ENCODE measurements at regions of chr10 and their contacts with region 1.

Region 1: DNA sequence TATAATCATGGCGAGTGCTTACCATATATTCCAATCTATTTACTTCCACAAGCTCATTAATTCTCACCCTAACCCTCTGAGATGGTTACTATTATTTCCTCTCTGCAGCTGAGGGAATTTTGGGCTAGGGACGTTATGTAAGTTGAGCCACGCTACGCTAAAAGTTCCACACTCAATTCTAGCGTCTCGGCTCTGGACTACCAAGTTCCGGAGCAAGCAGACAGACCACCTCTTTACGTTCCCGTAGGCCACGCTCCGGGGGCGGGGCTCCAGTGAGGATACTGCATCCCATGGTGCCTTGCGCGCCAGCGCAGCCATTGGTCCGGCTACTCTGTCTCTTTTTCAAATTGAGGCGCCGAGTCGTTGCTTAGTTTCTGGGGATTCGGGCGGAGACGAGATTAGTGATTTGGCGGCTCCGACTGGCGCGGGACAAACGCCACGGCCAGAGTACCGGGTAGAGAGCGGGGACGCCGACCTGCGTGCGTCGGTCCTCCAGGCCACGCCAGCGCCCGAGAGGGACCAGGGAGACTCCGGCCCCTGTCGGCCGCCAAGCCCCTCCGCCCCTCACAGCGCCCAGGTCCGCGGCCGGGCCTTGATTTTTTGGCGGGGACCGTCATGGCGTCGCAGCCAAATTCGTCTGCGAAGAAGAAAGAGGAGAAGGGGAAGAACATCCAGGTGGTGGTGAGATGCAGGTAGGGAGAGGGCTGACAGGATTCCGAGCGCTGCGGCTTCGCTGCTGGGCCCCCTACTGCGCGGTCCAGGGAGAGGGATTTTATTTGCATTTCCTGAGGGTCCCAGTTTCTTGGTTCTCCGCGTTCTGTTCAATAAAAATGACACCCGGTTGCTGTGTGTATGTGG is at the start of gene KIF11:
- DNase-seq: peak; percentile 98
- H3K4me3 ChIP-seq: peak within 1 kb of the TSS; percentile 80
- H3K4me3 Mint-ChIP-seq: peak within 1 kb of the TSS; percentile 100
- H3K27ac Mint-ChIP-seq: peak within 1 kb of the TSS; percentile 99
- H3K4me1 ChIP-seq: peaks cover 5% of the 10 kb centered on the region; the same call in 1 of the 2 replicates
- H3K4me1 Mint-ChIP-seq: peaks cover 30% of the 10 kb centered on the region
- H3K27me3 ChIP-seq: no peaks in the 10 kb centered on the region
- H3K27me3 Mint-ChIP-seq: no peaks in the 10 kb centered on the region
- CTCF ChIP-seq: peak in 1 of 2 experiments; percentile 2
- total RNA-seq, gene KIF11: 37.7 TPM in 2 replicates

Region 2: GRCh38 chr10:92517034-92517655 is 75.8 kb before region 1 on chr10:
- CTCF ChIA-PET with region 1: interaction called, 12 read pairs
- POLR2A ChIA-PET with region 1: interaction called, 4 read pairs
- intact Hi-C with region 1: no loop called
- DNase-seq: peak; percentile 61 to 67
- H3K4me3 ChIP-seq: no peak overlapping the region
- H3K4me3 Mint-ChIP-seq: no peak overlapping the region
- H3K27ac Mint-ChIP-seq: no peak overlapping the region
- H3K4me1 ChIP-seq: no peaks in the 10 kb centered on the region
- H3K4me1 Mint-ChIP-seq: no peaks in the 10 kb centered on the region
- H3K27me3 ChIP-seq: no peaks in the 10 kb centered on the region
- H3K27me3 Mint-ChIP-seq: no peaks in the 10 kb centered on the region
- CTCF ChIP-seq: peak; percentile 77 to 80

Region 3: GRCh38 chr10:92573798-92574547 is 19.0 kb before region 1 on chr10 and contains the start of gene IDE:
- CTCF ChIA-PET with region 1: interaction called, 24 read pairs
- POLR2A ChIA-PET with region 1: interaction called, 11 read pairs
- intact Hi-C with region 1: loop called (anchors 2 kb)
- DNase-seq: peak; percentile 91 to 93
- H3K4me3 ChIP-seq: peak within 1 kb of the TSS; percentile 69
- H3K4me3 Mint-ChIP-seq: peak within 1 kb of the TSS; percentile 81
- H3K27ac Mint-ChIP-seq: peak within 1 kb of the TSS; percentile 74
- H3K4me1 ChIP-seq: peaks cover 22% of the 10 kb centered on the region
- H3K4me1 Mint-ChIP-seq: peaks cover 30% of the 10 kb centered on the region
- H3K27me3 ChIP-seq: no peaks in the 10 kb centered on the region
- H3K27me3 Mint-ChIP-seq: no peaks in the 10 kb centered on the region
- CTCF ChIP-seq: peak; percentile 82 to 94
- total RNA-seq, gene IDE: 84.8 and 85.5 TPM in 2 replicates

Region 4: GRCh38 chr10:92644921-92645320 is 51.9 kb after region 1 on chr10:
- CTCF ChIA-PET with region 1: interaction called, 7 read pairs
- POLR2A ChIA-PET with region 1: no interaction called
- intact Hi-C with region 1: loop called (anchors 2 kb)
- DNase-seq: no peak
- H3K4me3 ChIP-seq: no peak overlapping the region
- H3K4me3 Mint-ChIP-seq: no peak overlapping the region
- H3K27ac Mint-ChIP-seq: no peak overlapping the region
- H3K4me1 ChIP-seq: peaks cover 9% of the 10 kb centered on the region
- H3K4me1 Mint-ChIP-seq: peaks cover 8% of the 10 kb centered on the region
- H3K27me3 ChIP-seq: no peaks in the 10 kb centered on the region
- H3K27me3 Mint-ChIP-seq: no peaks in the 10 kb centered on the region
- CTCF ChIP-seq: no peak

Region 5: GRCh38 chr10:92848441-92849233 is 255.6 kb after region 1 on chr10 and contains the start of gene EXOC6:
- CTCF ChIA-PET with region 1: interaction called, 4 read pairs
- POLR2A ChIA-PET with region 1: interaction called, 5 read pairs
- intact Hi-C with region 1: loop called (anchors 10 kb)
- DNase-seq: peak; percentile 80 to 87
- H3K4me3 ChIP-seq: peak within 1 kb of the TSS; percentile 78
- H3K4me3 Mint-ChIP-seq: peak within 1 kb of the TSS; percentile 75
- H3K27ac Mint-ChIP-seq: peak within 1 kb of the TSS; percentile 48
- H3K4me1 ChIP-seq: peaks cover 4% of the 10 kb centered on the region; the same call in 1 of the 2 replicates
- H3K4me1 Mint-ChIP-seq: peaks cover 8% of the 10 kb centered on the region
- H3K27me3 ChIP-seq: no peaks in the 10 kb centered on the region
- H3K27me3 Mint-ChIP-seq: no peaks in the 10 kb centered on the region
- CTCF ChIP-seq: peak in 1 of 2 experiments; percentile 32
- total RNA-seq, gene EXOC6: 12.5 and 13.4 TPM in 2 replicates

Measured in Caco-2 (cell line).